Colonic mucosa (tissue), 4 donors: ENCODE measurements at regions of chr17 and their contacts with region 1.

Region 1: DNA sequence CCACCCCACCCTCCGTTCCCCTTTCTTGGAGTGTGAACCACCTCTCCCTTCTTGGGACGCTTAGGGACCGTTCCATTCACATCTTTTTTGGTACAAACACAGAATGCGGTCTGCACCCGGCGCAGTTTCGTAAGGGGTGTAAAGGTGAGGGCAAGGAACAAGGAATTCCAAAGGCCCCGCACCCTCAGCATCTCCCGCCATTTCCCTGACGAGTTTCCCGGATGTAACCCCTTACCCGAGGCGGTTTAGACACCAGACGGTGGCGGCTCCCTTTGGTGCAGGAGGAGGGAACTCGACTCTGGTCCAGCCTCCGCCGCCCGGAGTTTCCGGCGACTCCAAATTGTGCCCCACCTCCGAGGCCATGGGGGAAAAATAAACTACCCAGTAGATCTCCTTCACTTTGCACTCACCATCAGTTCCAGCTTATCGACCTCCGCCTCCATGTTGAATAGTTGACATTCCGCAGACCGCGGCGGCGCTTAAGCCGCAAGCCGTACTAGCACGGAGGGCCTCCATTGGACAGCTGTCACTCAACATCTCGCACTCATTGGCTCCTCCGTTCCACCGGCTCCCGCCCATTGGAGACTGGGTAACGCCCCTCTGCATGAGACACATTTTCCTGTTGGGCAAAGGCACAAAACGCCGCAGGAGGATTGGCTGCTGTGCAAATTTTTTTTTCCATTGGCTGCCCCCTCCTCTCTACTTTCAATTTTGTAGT is at the start of gene SKA2:
- DNase-seq: peak; percentile 84
- H3K4me3 ChIP-seq: peak within 1 kb of the TSS; percentile 87
- H3K27ac ChIP-seq: peak within 1 kb of the TSS; percentile 88
- H3K4me1 ChIP-seq: no peaks in the 10 kb centered on the region
- H3K27me3 ChIP-seq: no peaks in the 10 kb centered on the region
- CTCF ChIP-seq: no peak
- total RNA-seq, gene SKA2: 29.5 to 53.8 TPM

Region 2: DNA sequence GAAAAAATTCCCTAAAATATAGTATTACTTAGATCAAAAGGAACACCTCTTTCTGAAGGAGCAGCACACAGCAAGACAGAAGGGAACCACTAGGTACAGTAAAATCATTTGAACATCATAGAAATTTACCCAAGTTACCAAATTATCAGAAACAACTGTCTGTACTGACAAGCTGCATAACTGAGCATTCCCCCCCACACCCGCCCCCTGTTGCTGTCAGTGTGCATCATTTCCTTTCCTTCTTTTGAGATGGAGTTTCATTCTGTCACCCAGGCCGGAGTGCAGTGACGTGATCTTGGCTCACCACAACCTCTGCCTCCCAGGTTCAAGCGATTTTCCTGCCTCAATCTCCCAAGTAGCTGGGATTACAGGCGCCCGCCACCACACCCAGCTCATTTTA is 168.9 kb before region 1 on chr17:
- intact Hi-C with region 1: no loop called
- DNase-seq: no peak
- H3K4me3 ChIP-seq: no peak overlapping the region
- H3K27ac ChIP-seq: no peak overlapping the region
- H3K4me1 ChIP-seq: no peaks in the 10 kb centered on the region
- H3K27me3 ChIP-seq: no peaks in the 10 kb centered on the region
- CTCF ChIP-seq: no peak

Region 3: GRCh38 chr17:59018019-59018418 is 136.9 kb before region 1 on chr17:
- intact Hi-C with region 1: no loop called
- DNase-seq: no peak
- H3K4me3 ChIP-seq: no peak overlapping the region
- H3K27ac ChIP-seq: no peak overlapping the region
- H3K4me1 ChIP-seq: no peaks in the 10 kb centered on the region
- H3K27me3 ChIP-seq: no peaks in the 10 kb centered on the region
- CTCF ChIP-seq: no peak

Region 4: DNA sequence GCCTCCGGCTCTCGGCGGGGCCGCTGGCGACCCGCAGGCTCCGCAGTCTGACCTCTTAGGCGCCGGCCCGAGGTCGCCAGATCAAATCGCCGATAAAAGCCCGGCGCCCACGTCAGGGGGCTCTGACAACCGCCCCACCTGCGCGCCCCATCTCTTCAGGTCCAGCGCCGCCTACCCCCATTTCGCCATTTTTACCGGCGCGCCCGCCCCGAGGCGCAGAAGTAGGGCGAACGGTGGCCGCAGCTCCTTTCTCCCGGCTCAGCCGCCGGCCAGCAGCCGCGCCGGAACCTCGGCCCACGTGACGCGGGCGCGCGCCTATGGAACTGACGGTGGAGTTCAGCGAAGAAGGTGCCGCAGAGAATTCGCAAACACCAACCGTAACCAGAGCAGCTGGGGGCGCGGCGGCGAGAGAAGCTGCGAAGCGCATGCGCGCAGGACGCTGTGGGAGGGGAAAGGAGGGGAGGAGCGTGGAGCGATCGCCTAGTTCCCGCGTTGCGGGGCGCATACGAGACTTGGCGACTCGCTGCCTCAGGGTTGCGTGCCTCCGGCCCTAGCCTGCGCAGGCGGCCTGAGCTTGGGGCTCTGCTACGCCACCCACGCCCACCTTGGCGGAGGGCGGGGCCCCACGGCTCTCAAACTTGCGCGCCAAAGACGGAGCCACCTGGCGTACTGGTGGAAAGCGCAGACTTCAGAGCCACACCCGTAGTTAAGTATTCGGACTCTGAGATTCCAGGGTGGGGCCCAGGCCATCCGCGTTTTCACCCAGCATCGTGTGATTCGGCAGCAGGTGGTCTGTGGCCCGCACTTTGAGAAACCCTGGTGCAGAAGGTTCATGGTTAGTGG is 48.2 kb before region 1 on chr17 and contains the start of gene TRIM37:
- intact Hi-C with region 1: loop called (anchors 5 kb)
- DNase-seq: peak; percentile 98
- H3K4me3 ChIP-seq: peak within 1 kb of the TSS; percentile 83
- H3K27ac ChIP-seq: peak within 1 kb of the TSS; percentile 84
- H3K4me1 ChIP-seq: no peaks in the 10 kb centered on the region
- H3K27me3 ChIP-seq: no peaks in the 10 kb centered on the region
- CTCF ChIP-seq: no peak
- total RNA-seq, gene TRIM37: 17.2 to 24.1 TPM